B cell (primary cell): ENCODE measurements at regions of chr3 and their contacts with region 1.

Region 1: GRCh38 chr3:40524568-40525285 is at the start of gene ZNF621:
- DNase-seq: peak; percentile 89
- ATAC-seq: peak; percentile 99
- H3K4me3 ChIP-seq: peak within 1 kb of the TSS; percentile 27 to 94 (median 87)
- H3K4me3 Mint-ChIP-seq: peak within 1 kb of the TSS; percentile 96
- H3K27ac ChIP-seq: peak within 1 kb of the TSS; percentile 86 to 91
- H3K27ac Mint-ChIP-seq: peak within 1 kb of the TSS; percentile 94
- H3K4me1 ChIP-seq: peaks cover 16% of the 10 kb centered on the region in 2 donors
- H3K4me1 Mint-ChIP-seq: peaks cover 24% of the 10 kb centered on the region
- H3K27me3 ChIP-seq: no peaks in the 10 kb centered on the region
- H3K27me3 Mint-ChIP-seq: no peaks in the 10 kb centered on the region
- CTCF ChIP-seq: no peak
- total RNA-seq, gene ZNF621: 34.6 and 35.2 TPM in 2 replicates

Region 2: DNA sequence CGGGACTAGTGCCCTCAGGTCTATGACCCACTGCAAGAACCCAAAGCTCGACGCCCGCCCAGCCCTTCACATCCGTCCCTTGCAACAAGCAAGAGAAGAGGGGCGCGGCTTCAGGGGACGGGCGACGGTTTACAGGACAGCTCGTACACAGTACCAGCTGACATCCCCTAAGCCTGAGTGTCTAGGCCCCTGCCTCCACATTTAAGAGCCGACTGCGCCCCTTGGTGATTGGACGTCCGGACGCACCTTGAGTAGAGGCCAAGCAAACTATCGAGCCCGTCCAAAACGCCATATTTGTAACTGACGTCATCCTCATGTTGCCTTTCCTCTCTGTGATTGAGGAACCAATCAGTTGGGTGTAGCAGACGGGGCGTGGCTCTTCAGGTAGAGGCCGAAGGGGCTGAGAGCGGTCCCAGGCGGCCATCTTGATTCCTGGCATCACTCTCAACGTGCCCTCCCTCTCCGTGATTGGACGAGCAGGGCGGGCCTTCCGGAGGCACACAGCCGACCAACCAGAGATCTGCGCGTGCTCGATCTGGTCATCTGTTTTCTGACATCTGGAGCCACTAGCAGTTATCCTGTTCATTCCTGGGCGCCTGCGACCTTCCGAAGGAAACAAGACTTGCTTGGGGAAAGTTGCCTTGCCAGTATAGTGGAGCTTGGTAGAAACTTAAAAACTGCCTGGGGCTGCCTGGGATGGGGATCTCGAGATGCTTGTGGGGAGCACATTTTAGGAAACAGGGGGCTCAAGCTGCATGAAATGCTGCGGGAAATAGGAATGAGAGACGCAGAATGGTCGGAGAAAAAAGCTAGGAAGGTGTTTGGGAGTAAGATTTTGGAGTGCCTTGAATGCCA is 71.6 kb before region 1 on chr3:
- CTCF ChIA-PET with region 1: interaction called, 5 read pairs
- POLR2A ChIA-PET with region 1: no interaction called
- intact Hi-C with region 1: loop called (anchors 1 kb)
- DNase-seq: peak; percentile 97
- ATAC-seq: peak; percentile 90
- H3K4me3 ChIP-seq: peak overlapping the region; percentile 60 to 88 (median 77)
- H3K4me3 Mint-ChIP-seq: peak overlapping the region; percentile 96
- H3K27ac ChIP-seq: peak overlapping the region; percentile 92 to 95
- H3K27ac Mint-ChIP-seq: peak overlapping the region; percentile 99
- H3K4me1 ChIP-seq: peaks cover 24 to 28% of the 10 kb centered on the region in 2 donors
- H3K4me1 Mint-ChIP-seq: peaks cover 36% of the 10 kb centered on the region
- H3K27me3 ChIP-seq: no peaks in the 10 kb centered on the region
- H3K27me3 Mint-ChIP-seq: no peaks in the 10 kb centered on the region
- CTCF ChIP-seq: peak; percentile 6

Region 3: GRCh38 chr3:40505599-40506462 is 18.9 kb before region 1 on chr3 and contains the start of gene ZNF620:
- CTCF ChIA-PET with region 1: interaction called, 5 read pairs
- POLR2A ChIA-PET with region 1: interaction called, 4 read pairs
- intact Hi-C with region 1: loop called (anchors 1 kb)
- DNase-seq: peak; percentile 62
- ATAC-seq: peak; percentile 80
- H3K4me3 ChIP-seq: peak within 1 kb of the TSS; percentile 60 to 93 (median 76)
- H3K4me3 Mint-ChIP-seq: peak within 1 kb of the TSS; percentile 99
- H3K27ac ChIP-seq: peak within 1 kb of the TSS; percentile 47 to 65
- H3K27ac Mint-ChIP-seq: peak within 1 kb of the TSS; percentile 88
- H3K4me1 ChIP-seq: peaks cover 6 to 10% of the 10 kb centered on the region in 2 donors
- H3K4me1 Mint-ChIP-seq: peaks cover 13% of the 10 kb centered on the region
- H3K27me3 ChIP-seq: no peaks in the 10 kb centered on the region
- H3K27me3 Mint-ChIP-seq: no peaks in the 10 kb centered on the region
- CTCF ChIP-seq: peak; percentile 18
- total RNA-seq, gene ZNF620: 5.3 and 6.6 TPM in 2 replicates